Left colon (tissue), 2 donors: ENCODE measurements at regions of chr1 and their contacts with region 1.

Region 1: GRCh38 chr1:33634806-33635205 is 162.4 kb downstream of the ZSCAN20 start:
- DNase-seq: peak in 1 of 2 donors; percentile 36
- ATAC-seq: peak; percentile 58

Region 2: GRCh38 chr1:34742667-34743270 is 1108.0 kb after region 1 on chr1:
- intact Hi-C with region 1: loop called in 1 of 2 experiments (anchors 5 kb)
- DNase-seq: peak; percentile 70 to 86
- ATAC-seq: peak; percentile 89